CD4-positive, alpha-beta memory T cell (primary cell): ENCODE measurements at regions of chr17 and their contacts with region 1.

Region 1: DNA sequence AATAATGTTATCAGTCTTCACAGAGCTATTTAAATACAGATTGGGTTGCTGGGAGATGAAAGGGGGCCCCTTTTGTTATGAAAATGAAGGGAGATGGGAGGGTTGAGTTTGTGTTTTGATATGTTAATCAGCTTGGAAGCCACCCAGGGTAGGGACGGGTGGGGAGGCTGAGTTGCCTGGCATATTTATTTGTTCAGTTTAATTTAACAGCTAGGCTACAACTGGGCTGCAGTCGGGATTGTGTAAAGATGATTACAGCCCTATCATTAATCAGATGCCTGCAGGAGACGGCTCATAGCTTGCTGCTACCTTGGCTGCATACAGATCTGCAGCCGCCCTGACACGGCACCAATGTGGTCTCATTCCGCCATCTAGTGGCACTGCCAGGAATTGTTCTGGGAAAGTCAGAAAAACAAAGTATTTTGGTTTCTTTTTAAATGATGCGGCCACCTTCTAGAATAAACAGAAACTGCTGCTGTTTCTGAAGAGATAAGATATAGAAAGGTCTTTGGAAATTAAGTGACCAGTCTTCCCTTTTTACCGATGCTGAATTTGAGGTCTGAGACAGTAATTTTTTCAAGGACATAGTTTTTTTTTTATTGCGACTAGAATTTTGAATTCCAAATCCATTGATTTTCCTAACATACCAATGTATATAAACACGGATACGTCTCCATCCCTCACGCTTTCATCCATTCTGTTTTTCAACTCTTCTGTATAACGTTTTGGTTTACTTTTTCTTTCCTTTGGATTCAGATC is 458.0 kb upstream of the ASIC2 start:
- DNase-seq: peak; percentile 49 to 55 (median 54)
- H3K4me3 ChIP-seq: no peak overlapping the region
- H3K4me3 Mint-ChIP-seq: peak overlapping the region in 4 of 8 donors; percentile 7 to 63 (median 33)
- H3K27ac ChIP-seq: no peak overlapping the region
- H3K27ac Mint-ChIP-seq: peak overlapping the region in 1 of 7 donors; percentile 37
- H3K4me1 ChIP-seq: peaks cover 4% of the 10 kb centered on the region
- H3K4me1 Mint-ChIP-seq: peaks cover 0 to 12% (median 3%) of the 10 kb centered on the region in 4 donors
- H3K27me3 ChIP-seq: no peaks in the 10 kb centered on the region
- H3K27me3 Mint-ChIP-seq: peaks cover 15 to 43% of the 10 kb centered on the region in 2 donors

Region 2: DNA sequence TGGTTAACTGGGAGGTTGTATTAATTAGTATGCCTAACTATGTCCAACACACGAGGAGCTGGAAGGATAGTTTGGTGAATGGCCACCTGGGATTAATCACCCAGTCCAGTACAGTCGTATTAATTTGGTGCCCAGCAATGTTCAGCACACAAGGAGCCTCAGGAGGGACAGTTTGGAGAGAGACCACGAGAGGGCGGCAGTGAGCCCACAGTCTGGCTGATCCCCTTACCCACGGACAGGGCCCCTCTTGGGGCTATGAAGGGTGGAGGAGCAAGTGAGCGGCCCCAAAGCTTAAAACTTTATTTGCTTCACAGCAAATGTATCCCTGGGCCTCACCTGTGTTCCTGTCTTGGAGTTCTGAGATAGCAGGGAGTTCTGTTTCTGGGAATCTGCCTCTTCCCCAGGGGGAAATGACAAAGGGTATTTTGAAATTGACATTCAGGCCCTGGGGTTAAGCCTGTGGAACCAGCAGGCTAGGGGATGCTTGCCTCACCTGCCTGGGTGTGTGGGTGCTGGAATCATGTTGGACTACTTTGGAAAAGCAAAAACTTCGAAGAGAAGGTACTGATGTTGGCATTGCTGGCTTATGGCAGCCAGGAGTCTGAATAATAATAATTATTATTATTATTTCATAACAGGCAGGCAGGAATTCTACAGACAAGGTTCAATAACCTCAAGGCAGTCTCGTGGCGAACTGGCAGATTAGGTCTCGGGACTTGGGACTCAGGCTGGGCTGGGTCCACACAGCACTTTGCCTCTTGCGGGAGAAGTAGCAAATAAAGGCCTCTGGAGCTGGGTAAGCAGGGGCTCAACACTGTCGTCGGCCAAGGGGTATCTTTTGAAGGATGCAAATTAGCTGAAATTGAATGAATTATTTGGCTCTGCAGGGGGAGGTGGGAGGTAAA is 230.4 kb before region 1 on chr17:
- CTCF ChIA-PET with region 1: interaction called, 4 read pairs
- POLR2A ChIA-PET with region 1: no interaction called
- intact Hi-C with region 1: loop called (anchors 5 kb)
- DNase-seq: peak in 2 of 5 donors; percentile 1 to 9
- H3K4me3 ChIP-seq: no peak overlapping the region
- H3K4me3 Mint-ChIP-seq: no peak overlapping the region
- H3K27ac ChIP-seq: no peak overlapping the region
- H3K27ac Mint-ChIP-seq: no peak overlapping the region
- H3K4me1 ChIP-seq: no peaks in the 10 kb centered on the region
- H3K4me1 Mint-ChIP-seq: no peaks in the 10 kb centered on the region
- H3K27me3 ChIP-seq: no peaks in the 10 kb centered on the region
- H3K27me3 Mint-ChIP-seq: peaks cover 2 to 3% of the 10 kb centered on the region in 2 donors

Region 3: GRCh38 chr17:33686171-33686570 is 65.0 kb before region 1 on chr17:
- CTCF ChIA-PET with region 1: no interaction called
- POLR2A ChIA-PET with region 1: no interaction called
- intact Hi-C with region 1: no loop called
- DNase-seq: no peak
- H3K4me3 ChIP-seq: no peak overlapping the region
- H3K4me3 Mint-ChIP-seq: no peak overlapping the region
- H3K27ac ChIP-seq: no peak overlapping the region
- H3K27ac Mint-ChIP-seq: no peak overlapping the region
- H3K4me1 ChIP-seq: no peaks in the 10 kb centered on the region
- H3K4me1 Mint-ChIP-seq: no peaks in the 10 kb centered on the region
- H3K27me3 ChIP-seq: no peaks in the 10 kb centered on the region
- H3K27me3 Mint-ChIP-seq: peaks cover 2 to 3% of the 10 kb centered on the region in 2 donors

Region 4: GRCh38 chr17:33739714-33740113 is 11.4 kb before region 1 on chr17:
- CTCF ChIA-PET with region 1: interaction called, 10 read pairs
- POLR2A ChIA-PET with region 1: no interaction called
- intact Hi-C with region 1: no loop called
- DNase-seq: no peak
- H3K4me3 ChIP-seq: no peak overlapping the region
- H3K4me3 Mint-ChIP-seq: no peak overlapping the region
- H3K27ac ChIP-seq: no peak overlapping the region
- H3K27ac Mint-ChIP-seq: no peak overlapping the region
- H3K4me1 ChIP-seq: no peaks in the 10 kb centered on the region
- H3K4me1 Mint-ChIP-seq: no peaks in the 10 kb centered on the region
- H3K27me3 ChIP-seq: peaks cover 6% of the 10 kb centered on the region
- H3K27me3 Mint-ChIP-seq: peaks cover 16 to 18% of the 10 kb centered on the region in 2 donors